Right cardiac atrium (tissue), 5 donors: ENCODE measurements at regions of chr7 and their contacts with region 1.

Region 1: DNA sequence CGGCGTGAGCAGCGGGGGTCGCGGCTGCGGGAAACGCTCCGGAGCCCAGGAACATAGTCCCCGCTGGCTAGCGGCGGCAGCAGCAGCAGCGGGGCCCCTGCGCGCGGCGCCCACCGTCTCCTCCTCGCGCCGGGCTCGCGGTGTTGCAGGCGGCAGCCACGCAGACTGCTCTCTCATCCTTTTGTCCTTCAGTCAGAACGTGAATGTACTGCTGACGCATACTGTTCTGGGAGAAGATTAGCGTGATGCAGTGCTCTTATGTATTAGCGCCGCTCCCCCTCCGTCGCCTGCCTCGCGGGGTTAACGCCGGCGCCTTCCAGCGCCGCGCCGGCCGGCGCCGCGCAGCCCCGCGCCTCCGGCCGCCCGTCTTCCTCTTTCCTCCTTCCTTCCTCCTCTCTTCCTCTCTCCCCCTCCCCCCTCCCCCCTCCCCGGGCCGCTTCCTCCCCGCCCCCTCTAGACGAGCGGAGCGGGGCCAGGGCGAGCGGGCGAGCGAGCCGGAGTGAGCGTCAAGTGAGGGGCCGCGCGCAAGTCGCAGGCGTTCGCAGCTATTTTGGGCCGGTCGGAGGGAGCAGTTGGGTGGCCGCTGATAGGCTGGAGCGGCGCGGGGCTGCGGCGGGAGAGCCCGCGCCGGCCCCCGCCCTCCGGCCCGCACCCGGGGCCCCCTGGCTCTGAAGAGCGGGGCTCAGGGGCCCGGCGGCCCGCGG is 816 bp upstream of the LRRC4 start:
- DNase-seq: peak; percentile 59 to 78 (median 75)
- ATAC-seq: peak; percentile 73 to 83
- H3K4me3 ChIP-seq: peak overlapping the region; percentile 91
- H3K27ac ChIP-seq: peak overlapping the region; percentile 19
- H3K4me1 ChIP-seq: peaks cover 1% of the 10 kb centered on the region
- H3K27me3 ChIP-seq: no peaks in the 10 kb centered on the region

Region 2: DNA sequence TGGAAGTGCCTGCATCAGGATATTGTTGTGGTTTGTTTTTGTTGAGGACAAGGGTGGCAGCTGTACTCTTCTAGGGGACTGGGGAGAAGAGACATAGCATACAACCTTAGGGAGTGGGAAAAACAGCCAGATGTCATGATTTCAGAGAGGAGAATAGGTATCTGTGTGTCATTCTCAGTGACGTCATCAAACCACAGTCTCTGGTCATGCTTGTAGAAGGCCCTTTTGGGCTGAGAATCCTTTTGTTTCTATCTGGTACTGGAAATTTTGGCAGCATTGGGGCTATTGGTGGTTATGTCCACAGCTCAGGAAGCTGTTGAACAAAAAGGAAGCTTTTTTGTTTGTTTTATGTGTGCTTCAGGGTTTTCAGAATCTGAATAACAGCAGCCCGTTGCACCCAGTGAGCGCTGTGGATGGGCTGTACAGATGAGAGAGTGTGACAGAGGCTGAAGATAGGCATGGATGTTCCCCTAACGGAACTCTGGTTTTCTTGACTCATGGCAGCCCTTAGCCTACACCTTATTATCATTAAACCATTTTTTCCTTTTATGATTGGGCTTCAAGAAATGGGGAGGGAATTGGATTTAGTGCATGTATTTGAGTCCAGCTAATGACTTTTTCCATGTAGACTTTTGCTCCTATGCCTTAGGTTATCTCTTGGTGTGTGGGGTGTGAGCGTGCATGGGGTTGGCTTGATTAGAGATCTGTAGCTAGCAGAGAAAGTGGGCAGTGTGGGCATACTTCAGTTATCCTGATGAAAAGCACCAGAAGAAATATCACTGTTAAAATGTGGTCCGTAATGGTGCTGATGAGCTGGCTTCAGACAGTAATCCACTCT is 314.3 kb before region 1 on chr7:
- intact Hi-C with region 1: loop called in 2 of 4 experiments (anchors 10 kb)
- DNase-seq: no peak
- ATAC-seq: no peak
- H3K4me3 ChIP-seq: no peak overlapping the region
- H3K27ac ChIP-seq: no peak overlapping the region
- H3K4me1 ChIP-seq: no peaks in the 10 kb centered on the region
- H3K27me3 ChIP-seq: no peaks in the 10 kb centered on the region